ENCODE measurements at regions of chr1 and their contacts with region 1.

Region 1: DNA sequence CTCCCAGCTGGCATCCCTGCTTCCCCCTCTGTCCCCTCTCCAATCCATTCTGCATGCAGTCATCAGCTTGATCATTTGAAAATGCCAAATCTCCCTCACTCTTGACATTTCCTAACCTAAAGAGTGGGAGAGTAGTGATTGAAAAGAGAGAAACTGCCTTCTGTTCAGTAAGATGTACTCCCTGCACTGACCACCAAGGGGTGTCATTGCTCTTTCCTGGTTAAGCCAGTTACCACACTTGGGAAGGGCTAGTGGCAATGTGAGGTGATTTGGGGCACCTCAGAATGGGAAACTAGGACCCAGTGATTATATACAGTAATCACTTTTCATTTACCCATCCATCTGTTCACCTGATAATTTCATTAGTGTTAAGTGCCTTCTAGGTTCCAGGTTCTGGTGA is 6.9 kb upstream of the TMEM269 start:
- DNase-seq: peak in 1 of 2 experiments; percentile 68
- H3K4me3 ChIP-seq: no peak overlapping the region
- H3K27ac ChIP-seq: no peak overlapping the region
- H3K4me1 ChIP-seq: no peaks in the 10 kb centered on the region
- H3K27me3 ChIP-seq: no peaks in the 10 kb centered on the region
- CTCF ChIP-seq: peak; percentile 53 to 92 (median 76)
- EP300 ChIP-seq: no peak
- POLR2A ChIP-seq: no peak
- RAD21 ChIP-seq: peak; percentile 92 to 94

Region 2: GRCh38 chr1:42684139-42684538 is 93.7 kb before region 1 on chr1:
- CTCF ChIA-PET with region 1: no interaction called
- POLR2A ChIA-PET with region 1: no interaction called
- DNase-seq: no peak
- H3K4me3 ChIP-seq: peak overlapping the region; percentile 83 to 99 (median 88); a peak in 7 of 8 replicates
- H3K27ac ChIP-seq: no peak overlapping the region
- H3K4me1 ChIP-seq: peaks cover 2 to 11% (median 4%) of the 10 kb centered on the region in 4 experiments; a peak in 6 of 7 replicates
- H3K27me3 ChIP-seq: no peaks in the 10 kb centered on the region
- CTCF ChIP-seq: no peak
- EP300 ChIP-seq: no peak
- POLR2A ChIP-seq: no peak
- RAD21 ChIP-seq: no peak

Region 3: DNA sequence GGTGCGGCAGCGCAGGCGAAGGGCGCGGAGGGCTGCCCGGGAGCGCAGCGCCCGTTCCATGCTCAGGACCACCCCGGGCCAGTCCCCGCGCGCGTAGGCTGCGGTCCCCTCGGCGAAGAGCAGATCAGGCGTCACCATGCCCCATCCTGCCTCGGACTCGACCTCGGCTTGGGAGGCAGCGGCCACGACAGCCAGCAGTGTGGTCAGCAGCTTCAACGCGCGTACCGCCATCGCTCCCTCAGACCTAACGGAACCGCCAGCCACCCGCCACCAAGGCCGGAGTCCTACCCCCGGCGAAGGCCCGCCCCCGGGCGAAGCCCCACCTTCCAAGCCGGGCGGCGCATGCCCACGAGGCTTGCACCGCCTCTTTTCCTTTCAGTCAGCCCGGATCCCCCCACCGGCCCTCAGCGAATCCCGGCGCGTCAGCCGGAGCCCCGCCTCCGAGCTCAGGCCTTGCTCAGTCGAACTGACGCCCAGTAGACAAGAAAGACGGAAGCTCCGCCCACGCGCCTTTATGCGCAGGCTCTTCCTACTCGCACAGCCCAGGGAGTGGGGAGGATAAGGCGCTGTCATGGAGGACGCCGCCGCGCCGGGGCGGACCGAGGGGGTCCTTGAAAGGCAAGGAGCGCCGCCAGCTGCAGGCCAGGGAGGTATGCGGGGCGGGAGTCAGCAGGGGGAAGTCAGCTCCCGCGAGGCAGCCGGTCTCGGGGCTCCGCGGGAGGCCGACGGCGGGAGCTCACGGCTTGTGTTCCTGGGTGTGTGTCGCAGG is 10.9 kb before region 1 on chr1 and contains the starts of genes C1orf50 and P3H1:
- CTCF ChIA-PET with region 1: interaction called, 26 read pairs
- POLR2A ChIA-PET with region 1: interaction called, 10 read pairs
- DNase-seq: peak; percentile 98 to 99
- H3K4me3 ChIP-seq: peak within 1 kb of the TSS; percentile 82 to 92 (median 84)
- H3K27ac ChIP-seq: peak within 1 kb of the TSS; percentile 17; the same call in 1 of the 2 replicates
- H3K4me1 ChIP-seq: peaks cover 0 to 6% (median 3%) of the 10 kb centered on the region in 4 experiments; a peak in 5 of 7 replicates
- H3K27me3 ChIP-seq: no peaks in the 10 kb centered on the region
- CTCF ChIP-seq: no peak
- EP300 ChIP-seq: no peak
- POLR2A ChIP-seq: peak in 1 of 2 experiments; percentile 73; a peak in 1 of 3 replicates
- RAD21 ChIP-seq: no peak
- total RNA-seq, gene C1orf50: 6.9 and 7.1 TPM in 2 replicates
- total RNA-seq, gene P3H1: 58.4 and 60.4 TPM in 2 replicates

Region 4: DNA sequence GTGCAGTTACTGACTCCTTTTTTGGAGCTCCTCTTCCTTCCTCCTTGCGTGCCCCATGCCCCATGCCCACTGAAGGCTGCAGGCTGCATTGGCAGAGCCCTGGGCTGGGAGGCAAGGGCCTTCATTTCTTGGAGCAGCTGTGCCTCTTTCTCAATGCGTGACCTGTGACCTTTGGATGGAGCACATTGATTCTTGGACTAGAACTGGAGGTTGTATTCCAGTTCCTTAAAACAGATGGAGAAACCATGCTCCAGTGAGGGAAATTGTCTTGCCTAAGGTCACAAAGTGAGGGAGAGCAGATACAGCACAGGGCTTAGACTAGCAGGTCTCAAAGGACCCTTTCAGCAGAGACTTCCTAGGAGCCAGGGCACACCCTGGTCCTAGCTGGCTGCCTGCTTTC is 16.0 kb after region 1 on chr1:
- CTCF ChIA-PET with region 1: interaction called, 51 read pairs
- POLR2A ChIA-PET with region 1: interaction called, 9 read pairs
- DNase-seq: no peak
- H3K4me3 ChIP-seq: no peak overlapping the region
- H3K27ac ChIP-seq: no peak overlapping the region
- H3K4me1 ChIP-seq: no peaks in the 10 kb centered on the region
- H3K27me3 ChIP-seq: no peaks in the 10 kb centered on the region
- CTCF ChIP-seq: no peak
- EP300 ChIP-seq: no peak
- POLR2A ChIP-seq: no peak
- RAD21 ChIP-seq: no peak

Region 5: GRCh38 chr1:42807056-42807668 is 29.3 kb after region 1 on chr1:
- CTCF ChIA-PET with region 1: interaction called, 16 read pairs
- POLR2A ChIA-PET with region 1: interaction called, 4 read pairs
- DNase-seq: no peak
- H3K4me3 ChIP-seq: no peak overlapping the region
- H3K27ac ChIP-seq: no peak overlapping the region
- H3K4me1 ChIP-seq: no peaks in the 10 kb centered on the region
- H3K27me3 ChIP-seq: no peaks in the 10 kb centered on the region
- CTCF ChIP-seq: no peak
- EP300 ChIP-seq: no peak
- POLR2A ChIP-seq: no peak
- RAD21 ChIP-seq: no peak

Region 6: GRCh38 chr1:42822800-42823392 is 45.0 kb after region 1 on chr1:
- CTCF ChIA-PET with region 1: interaction called, 10 read pairs
- POLR2A ChIA-PET with region 1: no interaction called
- DNase-seq: no peak
- H3K4me3 ChIP-seq: no peak overlapping the region
- H3K27ac ChIP-seq: no peak overlapping the region
- H3K4me1 ChIP-seq: peaks cover 0 to 5% (median 1%) of the 10 kb centered on the region in 4 experiments; a peak in 1 of 7 replicates
- H3K27me3 ChIP-seq: no peaks in the 10 kb centered on the region
- CTCF ChIP-seq: no peak
- EP300 ChIP-seq: no peak
- POLR2A ChIP-seq: no peak
- RAD21 ChIP-seq: no peak

Region 7: DNA sequence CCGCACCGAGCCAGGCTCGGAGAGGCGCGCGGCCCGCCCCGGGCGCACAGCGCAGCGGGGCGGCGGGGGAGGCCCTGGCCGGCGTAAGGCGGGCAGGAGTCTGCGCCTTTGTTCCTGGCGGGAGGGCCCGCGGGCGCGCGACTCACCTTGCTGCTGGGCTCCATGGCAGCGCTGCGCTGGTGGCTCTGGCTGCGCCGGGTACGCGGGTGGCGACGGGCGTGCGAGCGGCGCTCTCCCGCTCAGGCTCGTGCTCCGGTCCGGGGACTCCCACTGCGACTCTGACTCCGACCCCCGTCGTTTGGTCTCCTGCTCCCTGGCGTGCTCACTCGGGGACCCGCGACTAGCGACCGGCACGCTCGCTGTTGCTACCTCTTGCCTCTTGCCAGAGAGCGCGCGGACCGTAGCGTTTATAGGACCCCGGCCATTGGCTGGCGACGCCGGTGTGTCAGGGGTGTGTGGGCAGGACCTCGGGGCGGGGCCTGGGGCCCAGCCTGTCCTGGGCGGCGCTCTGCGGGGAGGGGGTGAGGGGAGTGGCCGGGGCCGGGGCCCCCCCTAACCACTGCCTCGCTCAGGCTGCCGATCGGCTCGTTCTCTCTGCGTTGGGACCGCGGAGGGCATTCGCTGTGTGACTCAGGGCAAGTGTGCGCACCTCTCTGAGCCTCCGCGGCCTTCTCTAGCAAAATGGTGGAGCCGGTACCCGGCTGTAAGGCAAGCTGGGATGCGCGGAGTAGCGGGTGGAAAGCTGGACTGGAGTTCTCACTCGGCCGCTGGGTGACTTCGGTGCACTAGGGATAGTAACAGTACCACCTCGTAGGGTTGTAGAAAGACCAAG is 180.9 kb after region 1 on chr1 and contains the start of gene SLC2A1:
- CTCF ChIA-PET with region 1: no interaction called
- POLR2A ChIA-PET with region 1: no interaction called
- DNase-seq: peak; percentile 90 to 95
- H3K4me3 ChIP-seq: peak within 1 kb of the TSS; percentile 69 to 92 (median 91)
- H3K27ac ChIP-seq: peak within 1 kb of the TSS; percentile 87
- H3K4me1 ChIP-seq: peaks cover 17 to 49% (median 36%) of the 10 kb centered on the region in 4 experiments
- H3K27me3 ChIP-seq: no peaks in the 10 kb centered on the region
- CTCF ChIP-seq: peak in 1 of 3 experiments; percentile 2; a peak in 1 of 4 replicates
- EP300 ChIP-seq: no peak; a peak in 1 of 3 replicates
- POLR2A ChIP-seq: peak; percentile 95 to 97
- RAD21 ChIP-seq: no peak
- total RNA-seq, gene SLC2A1: 230 and 239 TPM in 2 replicates

Measured in H1 (cell line).